GM18951 (cell line): ENCODE measurements at regions of chr9 and their contacts with region 1.

Region 1: GRCh38 chr9:28073270-28073669 is 500.0 kb upstream of the C9orf72 start:
- POLR2A ChIP-seq: no peak

Region 2: GRCh38 chr9:27726244-27727081 is 346.8 kb before region 1 on chr9:
- in situ Hi-C with region 1: loop called (anchors 25 kb)
- POLR2A ChIP-seq: no peak